Thyroid gland (tissue), 4 donors: ENCODE measurements at regions of chr9 and their contacts with region 1.

Region 1: GRCh38 chr9:4344946-4345345 is 45.1 kb upstream of the GLIS3 start:
- DNase-seq: no peak
- H3K4me3 ChIP-seq: no peak overlapping the region
- H3K27ac ChIP-seq: no peak overlapping the region
- H3K4me1 ChIP-seq: peaks cover 0 to 9% of the 10 kb centered on the region in 2 donors
- H3K27me3 ChIP-seq: no peaks in the 10 kb centered on the region
- CTCF ChIP-seq: no peak
- POLR2A ChIP-seq: no peak

Region 2: GRCh38 chr9:3721096-3721495 is 623.9 kb before region 1 on chr9:
- intact Hi-C with region 1: loop called (anchors 10 kb)
- DNase-seq: no peak
- H3K4me3 ChIP-seq: no peak overlapping the region
- H3K27ac ChIP-seq: no peak overlapping the region
- H3K4me1 ChIP-seq: no peaks in the 10 kb centered on the region
- H3K27me3 ChIP-seq: no peaks in the 10 kb centered on the region
- CTCF ChIP-seq: no peak
- POLR2A ChIP-seq: no peak

Region 3: DNA sequence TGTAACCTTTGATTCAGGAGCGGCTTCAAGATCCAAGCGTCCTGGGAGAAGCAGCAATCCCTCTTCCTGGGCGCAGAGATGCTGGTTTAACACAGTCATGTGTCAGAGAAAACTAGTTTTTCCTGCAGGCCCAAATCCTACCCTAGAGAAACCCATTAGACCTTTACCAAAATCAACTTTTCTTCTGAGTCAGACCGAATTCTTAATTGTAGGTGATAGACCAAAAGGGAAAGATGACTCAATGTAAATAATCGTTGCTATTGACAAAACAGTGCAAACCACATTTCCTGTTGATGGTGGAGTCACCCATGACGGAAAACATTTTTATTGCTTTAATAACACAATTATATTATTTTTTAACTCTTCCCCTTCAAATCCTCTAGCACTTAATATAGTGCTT is 185.4 kb after region 1 on chr9:
- intact Hi-C with region 1: no loop called
- DNase-seq: no peak
- H3K4me3 ChIP-seq: no peak overlapping the region
- H3K27ac ChIP-seq: no peak overlapping the region
- H3K4me1 ChIP-seq: no peaks in the 10 kb centered on the region
- H3K27me3 ChIP-seq: no peaks in the 10 kb centered on the region
- CTCF ChIP-seq: no peak
- POLR2A ChIP-seq: no peak